IMR-90 (cell line): ENCODE measurements at regions of chr5 and their contacts with region 1.

Region 1: DNA sequence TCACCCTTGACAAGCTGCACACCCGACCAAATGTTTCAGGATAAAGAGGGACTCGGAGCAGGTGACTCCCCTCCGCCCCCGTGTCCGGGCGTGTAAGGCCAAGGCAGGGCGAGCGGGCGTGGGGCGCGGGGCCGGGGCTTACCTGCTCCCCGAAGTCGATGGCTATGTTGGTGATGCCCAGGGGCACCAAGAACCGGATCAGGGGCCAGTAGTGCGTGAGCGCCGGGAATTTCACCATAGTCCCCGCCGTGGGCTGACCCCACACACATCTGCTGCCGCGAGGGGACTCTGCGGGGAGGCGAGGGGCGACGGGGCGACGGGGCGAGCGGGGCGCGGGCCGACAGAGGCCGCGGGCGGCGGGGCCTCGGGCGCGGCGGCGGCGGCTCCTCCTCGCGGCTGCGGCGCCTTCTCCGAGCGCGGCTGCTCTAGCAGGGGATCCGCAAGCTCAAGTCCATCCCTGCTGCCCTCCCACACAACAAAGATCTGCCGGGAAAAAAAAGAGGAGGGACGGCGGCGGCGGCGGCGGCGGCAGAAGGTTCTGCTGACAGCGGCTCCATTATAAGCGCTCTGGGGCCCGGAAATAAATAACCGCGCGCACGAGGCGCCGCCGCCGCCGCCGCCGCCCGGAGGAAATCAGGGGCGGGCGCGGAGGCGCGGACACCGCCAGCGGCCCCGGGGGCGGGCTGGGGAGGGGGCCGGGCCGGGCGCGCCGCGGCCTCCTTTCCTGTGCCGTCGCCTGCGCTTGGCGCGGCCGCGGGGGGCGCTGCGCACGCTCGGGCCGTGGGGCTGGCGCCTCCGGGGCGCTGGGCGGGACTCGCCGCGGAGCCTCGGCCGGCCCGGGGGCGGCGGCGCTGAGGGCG is at the start of gene ANKH:
- DNase-seq: peak; percentile 69
- ATAC-seq: peak; percentile 97
- H3K4me3 ChIP-seq: peak within 1 kb of the TSS; percentile 65
- H3K27ac ChIP-seq: peak within 1 kb of the TSS; percentile 89
- H3K4me1 ChIP-seq: peaks cover 2% of the 10 kb centered on the region
- H3K27me3 ChIP-seq: no peaks in the 10 kb centered on the region
- CTCF ChIP-seq: peak; percentile 58
- POLR2A ChIP-seq: peak; percentile 20
- RAD21 ChIP-seq: peak; percentile 38
- total RNA-seq, gene ANKH: 5.2 and 5.6 TPM in 2 replicates

Region 2: GRCh38 chr5:14743601-14744295 is 127.7 kb before region 1 on chr5:
- CTCF ChIA-PET with region 1: no interaction called
- POLR2A ChIA-PET with region 1: no interaction called
- dilution Hi-C with region 1: no loop called
- in situ Hi-C with region 1: no loop called
- intact Hi-C with region 1: loop called (anchors 5 kb)
- DNase-seq: peak; percentile 77
- ATAC-seq: peak; percentile 92
- H3K4me3 ChIP-seq: no peak overlapping the region
- H3K27ac ChIP-seq: no peak overlapping the region
- H3K4me1 ChIP-seq: peaks cover 5% of the 10 kb centered on the region
- H3K27me3 ChIP-seq: no peaks in the 10 kb centered on the region
- CTCF ChIP-seq: no peak
- POLR2A ChIP-seq: no peak
- RAD21 ChIP-seq: 0 out of 2 replicates have a peak, but pooled peaks have one; percentile 3

Region 3: DNA sequence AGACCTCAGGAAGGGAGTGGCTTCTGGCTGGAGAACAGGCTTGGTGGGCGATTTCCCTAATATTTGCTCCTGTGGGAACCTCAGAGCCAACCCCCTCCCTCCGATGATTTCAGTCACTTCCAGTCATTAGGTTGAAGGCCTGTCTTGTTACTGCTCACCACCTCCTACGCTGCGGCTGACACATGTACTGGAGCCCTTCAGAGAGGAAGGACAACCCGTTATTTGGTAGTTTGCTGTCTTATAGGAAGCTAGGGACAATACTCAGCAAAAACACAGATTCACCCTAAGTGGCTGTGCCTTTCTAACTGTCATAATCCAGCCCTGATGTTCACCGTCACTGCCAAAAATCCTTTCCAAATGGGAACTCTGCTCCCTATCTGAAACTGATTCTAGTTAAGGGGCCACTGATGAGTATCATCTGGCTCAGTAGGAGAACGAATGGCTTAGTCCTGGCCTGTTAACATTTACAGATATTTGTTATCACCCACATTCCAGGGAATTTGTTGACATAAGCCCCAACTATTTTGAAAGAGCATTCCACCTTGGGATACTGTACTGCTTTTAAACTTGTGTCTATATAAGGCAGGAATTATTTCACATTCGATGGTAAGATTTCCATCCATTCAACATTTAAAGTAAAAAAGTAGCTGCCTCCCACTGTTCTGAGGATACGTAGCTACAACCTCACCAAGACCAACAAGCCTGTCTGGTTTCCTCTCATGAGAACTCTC is 29.5 kb after region 1 on chr5:
- CTCF ChIA-PET with region 1: no interaction called
- POLR2A ChIA-PET with region 1: interaction called, 3 read pairs
- dilution Hi-C with region 1: no loop called
- in situ Hi-C with region 1: no loop called
- intact Hi-C with region 1: loop called (anchors 2 kb)
- DNase-seq: peak; percentile 86
- ATAC-seq: peak; percentile 78
- H3K4me3 ChIP-seq: no peak overlapping the region
- H3K27ac ChIP-seq: peak overlapping the region; percentile 90
- H3K4me1 ChIP-seq: peaks cover 7% of the 10 kb centered on the region
- H3K27me3 ChIP-seq: peaks cover 2% of the 10 kb centered on the region
- CTCF ChIP-seq: no peak
- POLR2A ChIP-seq: no peak
- RAD21 ChIP-seq: no peak